ENCODE measurements at regions of chr12 and their contacts with region 1.

Region 1: GRCh38 chr12:114508529-114509129 is 102.7 kb upstream of the TBX5 start:
- DNase-seq: peak in 1 of 2 experiments; percentile 41
- H3K4me3 ChIP-seq: no peak overlapping the region
- H3K27ac ChIP-seq: no peak overlapping the region
- H3K4me1 ChIP-seq: no peaks in the 10 kb centered on the region
- H3K27me3 ChIP-seq: peaks cover 41% of the 10 kb centered on the region
- CTCF ChIP-seq: peak; percentile 76

Region 2: GRCh38 chr12:113965951-113966797 is 542.5 kb before region 1 on chr12 and contains the start of gene RBM19:
- CTCF ChIA-PET with region 1: interaction called, 3 read pairs
- POLR2A ChIA-PET with region 1: no interaction called
- intact Hi-C with region 1: loop called (anchors 5 kb)
- DNase-seq: peak; percentile 89 to 96
- H3K4me3 ChIP-seq: peak within 1 kb of the TSS; percentile 96
- H3K27ac ChIP-seq: peak within 1 kb of the TSS; percentile 57
- H3K4me1 ChIP-seq: peaks cover 10% of the 10 kb centered on the region
- H3K27me3 ChIP-seq: peaks cover 11% of the 10 kb centered on the region; the same call in 1 of the 2 replicates
- CTCF ChIP-seq: peak; percentile 89
- total RNA-seq, gene RBM19: 23.1 and 23.8 TPM in 2 replicates

Region 3: GRCh38 chr12:113980537-113981337 is 527.9 kb before region 1 on chr12:
- CTCF ChIA-PET with region 1: interaction called, 7 read pairs
- POLR2A ChIA-PET with region 1: no interaction called
- intact Hi-C with region 1: loop called (anchors 1 kb)
- DNase-seq: peak in 1 of 2 experiments; percentile 18
- H3K4me3 ChIP-seq: no peak overlapping the region
- H3K27ac ChIP-seq: no peak overlapping the region
- H3K4me1 ChIP-seq: no peaks in the 10 kb centered on the region
- H3K27me3 ChIP-seq: peaks cover 44% of the 10 kb centered on the region
- CTCF ChIP-seq: peak; percentile 99

Region 4: DNA sequence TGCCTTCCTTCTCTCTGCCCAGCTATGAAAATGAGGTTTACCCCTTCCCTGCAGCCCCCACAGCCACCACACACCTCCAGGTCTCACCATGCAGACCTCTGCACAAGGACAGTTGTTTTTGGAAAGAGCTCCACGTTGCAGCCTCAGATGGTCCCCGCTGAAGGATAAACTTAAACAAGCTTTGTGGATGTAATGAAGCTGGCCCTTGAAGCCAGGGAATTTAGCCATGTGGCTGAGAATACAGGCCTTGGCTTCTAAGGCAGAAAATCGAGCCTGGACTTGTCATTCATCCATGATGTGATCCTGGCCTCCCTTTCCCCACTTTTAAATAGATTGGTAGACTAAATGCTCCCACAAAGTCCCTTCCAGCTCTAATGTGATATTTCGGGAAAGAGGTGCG is 96.0 kb after region 1 on chr12:
- CTCF ChIA-PET with region 1: no interaction called
- POLR2A ChIA-PET with region 1: no interaction called
- intact Hi-C with region 1: no loop called
- DNase-seq: no peak
- H3K4me3 ChIP-seq: no peak overlapping the region
- H3K27ac ChIP-seq: no peak overlapping the region
- H3K4me1 ChIP-seq: no peaks in the 10 kb centered on the region
- H3K27me3 ChIP-seq: peaks cover 35% of the 10 kb centered on the region
- CTCF ChIP-seq: no peak

Measured in PC-9 (cell line).